A549 (cell line): ENCODE measurements at regions of chr11 and their contacts with region 1.

Region 1: GRCh38 chr11:128630367-128631230 is 43.2 kb upstream of the ETS1 start:
- DNase-seq: peak; percentile 53 to 70
- ATAC-seq: peak; percentile 91 to 95
- H3K4me3 ChIP-seq: no peak overlapping the region
- H3K27ac ChIP-seq: peak overlapping the region; percentile 43 to 61; a peak in 2 of 6 replicates
- H3K4me1 ChIP-seq: peaks cover 11% of the 10 kb centered on the region; the same call in 2 of the 3 replicates
- CTCF ChIP-seq: peak; percentile 74
- EP300 ChIP-seq: no peak
- POLR2A ChIP-seq: no peak
- RAD21 ChIP-seq: peak; percentile 92 to 94

Region 2: GRCh38 chr11:128172046-128172878 is 458.3 kb before region 1 on chr11:
- CTCF ChIA-PET with region 1: interaction called, 156 read pairs
- POLR2A ChIA-PET with region 1: interaction called, 6 read pairs
- DNase-seq: peak; percentile 65 to 74
- ATAC-seq: peak; percentile 64 to 92; a peak in 5 of 6 replicates
- H3K4me3 ChIP-seq: no peak overlapping the region
- H3K27ac ChIP-seq: peak overlapping the region; percentile 6 to 52; a peak in 2 of 6 replicates
- H3K4me1 ChIP-seq: peaks cover 22% of the 10 kb centered on the region
- CTCF ChIP-seq: peak; percentile 81
- EP300 ChIP-seq: no peak
- POLR2A ChIP-seq: no peak
- RAD21 ChIP-seq: peak; percentile 91 to 93

Region 3: GRCh38 chr11:128290106-128290840 is 340.3 kb before region 1 on chr11:
- CTCF ChIA-PET with region 1: interaction called, 58 read pairs
- POLR2A ChIA-PET with region 1: no interaction called
- DNase-seq: peak; percentile 55 to 59
- ATAC-seq: peak; percentile 95 to 97
- H3K4me3 ChIP-seq: no peak overlapping the region
- H3K27ac ChIP-seq: peak overlapping the region; percentile 24 to 50; a peak in 3 of 6 replicates
- H3K4me1 ChIP-seq: no peaks in the 10 kb centered on the region
- CTCF ChIP-seq: peak; percentile 77
- EP300 ChIP-seq: no peak
- POLR2A ChIP-seq: no peak
- RAD21 ChIP-seq: peak; percentile 87

Region 4: GRCh38 chr11:128297091-128297651 is 333.4 kb before region 1 on chr11:
- CTCF ChIA-PET with region 1: interaction called, 58 read pairs
- POLR2A ChIA-PET with region 1: no interaction called
- DNase-seq: no peak
- ATAC-seq: no peak
- H3K4me3 ChIP-seq: no peak overlapping the region
- H3K27ac ChIP-seq: no peak overlapping the region
- H3K4me1 ChIP-seq: no peaks in the 10 kb centered on the region
- CTCF ChIP-seq: no peak
- EP300 ChIP-seq: no peak
- POLR2A ChIP-seq: no peak
- RAD21 ChIP-seq: no peak

Region 5: DNA sequence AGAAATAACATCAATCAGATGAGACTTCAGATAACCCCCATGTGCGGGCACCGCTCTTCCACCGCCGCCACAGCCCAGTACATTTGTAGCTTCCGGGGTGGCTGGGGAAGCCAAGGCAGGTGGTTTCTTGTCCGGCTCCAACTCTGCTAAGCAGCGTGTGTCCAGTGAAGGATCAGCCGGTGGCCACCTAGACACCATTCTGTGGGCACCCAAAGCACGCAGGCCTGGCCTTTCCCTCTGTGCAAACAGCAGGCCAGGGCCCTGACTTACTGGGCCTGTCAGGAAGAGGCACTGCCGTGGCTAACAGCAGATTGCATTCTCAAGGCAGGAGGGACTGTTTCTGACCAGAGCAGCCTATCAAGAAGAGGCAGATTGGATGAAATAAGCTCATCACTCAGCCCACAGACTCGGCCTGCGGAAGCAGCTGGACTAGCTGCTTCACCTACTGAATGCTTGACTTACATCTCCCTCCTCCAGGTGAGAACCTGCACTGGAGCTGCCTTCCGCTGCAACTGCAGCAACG is 118.1 kb before region 1 on chr11:
- CTCF ChIA-PET with region 1: interaction called, 10 read pairs
- POLR2A ChIA-PET with region 1: no interaction called
- DNase-seq: no peak
- ATAC-seq: no peak
- H3K4me3 ChIP-seq: no peak overlapping the region
- H3K27ac ChIP-seq: peak overlapping the region in 1 of 2 experiments; percentile 60; a peak in 2 of 6 replicates
- H3K4me1 ChIP-seq: peaks cover 72% of the 10 kb centered on the region
- CTCF ChIP-seq: no peak
- EP300 ChIP-seq: no peak
- POLR2A ChIP-seq: no peak
- RAD21 ChIP-seq: no peak

Region 6: DNA sequence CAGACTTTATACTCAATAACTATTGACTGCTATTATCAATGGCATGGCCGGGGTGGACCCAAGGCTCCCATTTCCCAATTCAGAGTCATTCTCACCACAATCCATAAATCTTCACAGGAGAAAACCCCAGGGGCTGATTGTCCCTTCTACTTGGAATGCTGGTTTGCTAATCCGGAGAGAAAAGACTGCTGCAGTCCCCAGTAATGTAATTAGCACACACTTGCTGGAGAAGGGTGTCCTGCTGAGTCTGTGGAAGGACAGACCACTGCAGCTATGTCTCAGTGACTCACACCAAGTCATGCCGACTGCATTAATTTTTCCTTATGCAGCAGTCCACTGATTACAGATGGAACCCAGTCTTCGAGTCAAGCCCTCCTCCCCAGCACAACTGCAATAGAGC is 37.3 kb before region 1 on chr11:
- CTCF ChIA-PET with region 1: no interaction called
- POLR2A ChIA-PET with region 1: no interaction called
- DNase-seq: no peak
- ATAC-seq: no peak
- H3K4me3 ChIP-seq: no peak overlapping the region
- H3K27ac ChIP-seq: no peak overlapping the region
- H3K4me1 ChIP-seq: no peaks in the 10 kb centered on the region
- CTCF ChIP-seq: no peak
- EP300 ChIP-seq: no peak
- POLR2A ChIP-seq: no peak
- RAD21 ChIP-seq: no peak